ENCODE measurements at regions of chr5 and their contacts with region 1.

Region 1: DNA sequence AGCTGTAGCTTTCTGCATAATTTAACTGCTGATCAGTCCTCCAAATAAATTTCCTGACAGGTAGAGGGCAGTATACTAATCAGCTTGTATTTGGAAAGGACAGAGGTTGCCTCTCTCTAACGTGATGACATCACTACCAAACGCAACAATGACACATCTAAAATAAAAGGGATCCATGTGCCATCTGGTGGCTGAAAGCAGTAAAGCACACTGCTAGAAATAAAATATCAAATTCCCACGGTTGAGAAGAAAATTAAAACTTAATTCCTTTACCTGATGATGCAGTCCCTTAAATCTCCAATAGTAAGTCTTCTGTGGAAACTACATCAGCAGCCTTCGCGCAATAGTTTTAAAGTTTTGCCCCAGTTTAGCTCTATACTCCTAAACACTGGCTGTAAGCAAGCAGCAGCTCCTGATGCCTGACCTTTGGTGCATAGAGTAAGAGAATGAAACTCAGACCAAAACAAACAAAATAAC is 54.5 kb downstream of the DIAPH1 start:
- DNase-seq: peak; percentile 65
- H3K4me3 Mint-ChIP-seq: peak overlapping the region; percentile 6
- H3K27ac Mint-ChIP-seq: peak overlapping the region; percentile 88
- H3K4me1 Mint-ChIP-seq: peaks cover 31% of the 10 kb centered on the region
- H3K27me3 Mint-ChIP-seq: no peaks in the 10 kb centered on the region

Region 2: GRCh38 chr5:140690941-140691924 is 873.0 kb before region 1 on chr5 and contains the starts of genes HARS1 and HARS2:
- intact Hi-C with region 1: loop called (anchors 1 kb)
- DNase-seq: peak; percentile 81
- H3K4me3 Mint-ChIP-seq: peak within 1 kb of the TSS; percentile 100
- H3K27ac Mint-ChIP-seq: peak within 1 kb of the TSS; percentile 95
- H3K4me1 Mint-ChIP-seq: peaks cover 50% of the 10 kb centered on the region
- H3K27me3 Mint-ChIP-seq: no peaks in the 10 kb centered on the region
- total RNA-seq, gene HARS1: 112 and 114 TPM in 2 replicates
- total RNA-seq, gene HARS2: 31.2 and 32.7 TPM in 2 replicates

Region 3: GRCh38 chr5:141320225-141321169 is 243.8 kb before region 1 on chr5 and contains the start of gene TAF7:
- intact Hi-C with region 1: loop called (anchors 1 kb)
- DNase-seq: peak; percentile 91
- H3K4me3 Mint-ChIP-seq: peak within 1 kb of the TSS; percentile 94
- H3K27ac Mint-ChIP-seq: peak within 1 kb of the TSS; percentile 98
- H3K4me1 Mint-ChIP-seq: peaks cover 31% of the 10 kb centered on the region
- H3K27me3 Mint-ChIP-seq: no peaks in the 10 kb centered on the region
- total RNA-seq, gene TAF7: 71.6 and 73.7 TPM in 2 replicates

Region 4: DNA sequence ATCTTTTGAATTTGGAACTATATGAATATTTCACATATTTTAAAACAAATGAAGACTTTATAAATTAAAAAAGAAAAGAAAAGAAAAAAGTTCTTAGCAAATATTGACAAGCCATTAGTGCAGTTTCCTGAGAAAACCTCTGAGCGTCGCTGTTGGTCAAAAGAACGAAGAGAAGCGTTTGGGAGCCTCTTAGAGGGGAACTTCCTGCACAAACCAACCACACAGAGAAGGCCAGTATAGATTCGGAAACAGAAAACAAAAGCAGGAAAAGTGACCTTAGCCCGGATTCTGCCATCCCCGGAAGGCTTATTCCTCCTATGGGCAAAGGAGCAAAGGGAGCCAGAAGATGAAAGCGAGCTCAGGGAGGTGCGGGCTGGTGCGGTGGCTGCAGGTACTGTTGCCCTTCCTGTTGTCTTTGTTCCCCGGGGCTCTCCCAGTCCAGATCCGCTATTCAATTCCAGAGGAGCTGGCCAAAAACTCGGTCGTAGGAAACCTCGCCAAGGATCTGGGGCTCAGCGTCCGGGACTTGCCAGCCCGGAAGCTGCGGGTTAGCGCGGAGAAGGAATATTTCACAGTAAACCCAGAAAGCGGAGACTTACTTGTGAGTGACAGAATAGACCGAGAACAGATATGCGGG is 204.3 kb before region 1 on chr5 and contains the start of gene PCDHGB2:
- intact Hi-C with region 1: loop called (anchors 1 kb)
- DNase-seq: no peak
- H3K4me3 Mint-ChIP-seq: peak within 1 kb of the TSS; percentile 85
- H3K27ac Mint-ChIP-seq: peak within 1 kb of the TSS; percentile 68
- H3K4me1 Mint-ChIP-seq: peaks cover 6% of the 10 kb centered on the region
- H3K27me3 Mint-ChIP-seq: peaks cover 19% of the 10 kb centered on the region
- total RNA-seq, gene PCDHGB2: 0.47 and 0.93 TPM in 2 replicates

Region 5: DNA sequence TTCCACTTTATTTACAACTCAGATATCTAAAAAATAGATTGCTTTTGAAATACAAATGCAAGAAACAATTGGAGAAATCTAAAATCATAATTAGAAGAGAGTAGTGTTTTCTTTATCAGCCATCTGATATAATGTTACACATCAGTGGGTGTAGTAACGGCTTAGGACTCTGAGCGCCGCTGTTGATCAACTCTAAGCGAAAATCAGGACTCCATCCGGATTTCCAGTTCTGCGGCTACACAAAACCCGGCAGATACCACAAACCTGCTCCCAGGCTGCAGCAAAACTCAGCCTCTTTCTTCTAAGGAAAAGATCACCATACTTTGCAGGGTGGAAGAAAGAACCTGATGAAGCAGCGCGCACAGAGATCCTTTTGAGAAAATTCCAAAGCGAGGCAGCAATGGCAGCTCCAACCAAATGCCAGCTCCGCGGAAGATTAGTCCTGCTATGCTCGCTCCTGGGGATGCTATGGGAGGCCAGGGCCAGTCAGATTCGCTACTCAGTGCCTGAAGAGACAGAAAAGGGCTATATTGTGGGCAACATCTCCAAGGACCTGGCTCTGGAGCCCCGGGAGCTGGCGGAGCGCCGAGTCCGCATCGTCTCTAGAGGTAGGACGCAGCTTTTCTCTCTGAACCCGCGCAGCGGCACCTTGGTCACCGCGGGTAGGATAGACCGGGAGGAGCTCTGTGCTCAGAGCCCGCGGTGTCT is 161.5 kb before region 1 on chr5 and contains the start of gene PCDHGA9:
- intact Hi-C with region 1: no loop called
- DNase-seq: no peak
- H3K4me3 Mint-ChIP-seq: no peak within 1 kb of the TSS
- H3K27ac Mint-ChIP-seq: no peak within 1 kb of the TSS
- H3K4me1 Mint-ChIP-seq: no peaks in the 10 kb centered on the region
- H3K27me3 Mint-ChIP-seq: peaks cover 21% of the 10 kb centered on the region
- total RNA-seq, gene PCDHGA9: 0.21 and 0.39 TPM in 2 replicates

Measured in activated T-helper 1 cell treated with anti-CD3 and anti-CD28 coated beads, Interleukin-12 subunit alpha, Interleukin-12 subunit beta, Interleukin-2, Interleukin-4 antibody, amounts not matched to agents 30 ng/mL and 10 ng/mL and 1 ng/mL, durations not matched to agents 14 hours and 24 hours and 36 hours (primary cell).